ENCODE measurements at regions of chr12 and their contacts with region 1.

Region 1: GRCh38 chr12:101697197-101697929 is at the start of gene CHPT1:
- DNase-seq: peak; percentile 87
- ATAC-seq: peak; percentile 79
- H3K4me3 ChIP-seq: peak within 1 kb of the TSS; percentile 75 to 90 (median 83)
- H3K4me3 Mint-ChIP-seq: peak within 1 kb of the TSS; percentile 99
- H3K27ac ChIP-seq: peak within 1 kb of the TSS; percentile 83 to 88
- H3K27ac Mint-ChIP-seq: peak within 1 kb of the TSS; percentile 98
- H3K4me1 ChIP-seq: peaks cover 26 to 31% of the 10 kb centered on the region in 2 donors
- H3K4me1 Mint-ChIP-seq: peaks cover 61% of the 10 kb centered on the region
- H3K27me3 ChIP-seq: no peaks in the 10 kb centered on the region
- H3K27me3 Mint-ChIP-seq: no peaks in the 10 kb centered on the region
- CTCF ChIP-seq: no peak
- total RNA-seq, gene CHPT1: 215 and 224 TPM in 2 replicates

Region 2: DNA sequence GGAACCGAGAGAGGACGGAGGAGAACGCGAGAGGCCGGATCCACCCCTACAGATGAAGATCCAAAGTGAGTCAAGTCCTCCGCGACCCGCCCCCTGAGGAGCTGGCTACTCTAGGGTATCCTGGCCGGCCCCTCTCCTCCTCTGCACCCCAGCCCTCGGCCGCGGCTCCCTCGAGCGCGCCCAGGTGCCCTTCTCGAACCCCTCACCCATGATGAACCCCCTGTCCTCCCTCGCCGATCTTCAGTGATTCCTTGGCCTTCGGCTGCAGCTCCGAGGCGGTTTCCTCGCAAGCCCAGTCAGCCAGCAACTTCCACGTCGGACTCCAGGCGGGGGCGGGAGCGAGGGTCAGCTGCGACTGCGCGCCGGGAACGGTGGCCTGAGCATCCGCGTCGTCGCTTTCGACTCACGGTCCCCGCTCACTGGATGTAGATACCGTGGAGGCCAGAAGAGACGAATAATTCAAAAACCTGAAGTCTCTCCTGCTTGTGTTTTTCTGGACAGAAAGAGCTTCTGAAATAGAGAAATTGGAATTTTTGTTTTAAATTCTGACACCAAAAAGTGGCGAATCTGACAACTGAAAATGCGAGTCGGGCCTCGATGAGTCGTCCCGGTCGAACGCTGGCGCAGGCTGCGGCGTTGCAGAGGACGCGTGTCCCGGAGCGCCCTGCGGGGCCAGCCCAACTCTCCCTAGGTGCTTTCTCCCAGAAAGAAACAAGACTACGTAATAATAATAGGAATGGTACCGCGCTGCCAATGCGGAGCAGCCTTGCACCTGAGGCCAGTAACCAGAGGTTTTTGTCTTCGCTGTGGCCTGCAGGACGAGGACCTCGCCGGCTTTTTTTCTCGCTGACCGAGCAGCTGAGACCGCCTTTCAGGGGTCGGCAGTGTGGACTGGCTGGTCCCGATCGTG is 289.7 kb before region 1 on chr12 and contains the start of gene ARL1:
- CTCF ChIA-PET with region 1: no interaction called
- POLR2A ChIA-PET with region 1: no interaction called
- intact Hi-C with region 1: loop called (anchors 5 kb)
- DNase-seq: peak; percentile 92
- ATAC-seq: peak; percentile 86
- H3K4me3 ChIP-seq: peak within 1 kb of the TSS; percentile 80 to 95 (median 93)
- H3K4me3 Mint-ChIP-seq: peak within 1 kb of the TSS; percentile 99
- H3K27ac ChIP-seq: peak within 1 kb of the TSS; percentile 91 to 96
- H3K27ac Mint-ChIP-seq: peak within 1 kb of the TSS; percentile 97
- H3K4me1 ChIP-seq: peaks cover 9 to 12% of the 10 kb centered on the region in 2 donors
- H3K4me1 Mint-ChIP-seq: peaks cover 28% of the 10 kb centered on the region
- H3K27me3 ChIP-seq: no peaks in the 10 kb centered on the region
- H3K27me3 Mint-ChIP-seq: peaks cover 5% of the 10 kb centered on the region
- CTCF ChIP-seq: no peak
- total RNA-seq, gene ARL1: 40.7 and 51.2 TPM in 2 replicates

Region 3: DNA sequence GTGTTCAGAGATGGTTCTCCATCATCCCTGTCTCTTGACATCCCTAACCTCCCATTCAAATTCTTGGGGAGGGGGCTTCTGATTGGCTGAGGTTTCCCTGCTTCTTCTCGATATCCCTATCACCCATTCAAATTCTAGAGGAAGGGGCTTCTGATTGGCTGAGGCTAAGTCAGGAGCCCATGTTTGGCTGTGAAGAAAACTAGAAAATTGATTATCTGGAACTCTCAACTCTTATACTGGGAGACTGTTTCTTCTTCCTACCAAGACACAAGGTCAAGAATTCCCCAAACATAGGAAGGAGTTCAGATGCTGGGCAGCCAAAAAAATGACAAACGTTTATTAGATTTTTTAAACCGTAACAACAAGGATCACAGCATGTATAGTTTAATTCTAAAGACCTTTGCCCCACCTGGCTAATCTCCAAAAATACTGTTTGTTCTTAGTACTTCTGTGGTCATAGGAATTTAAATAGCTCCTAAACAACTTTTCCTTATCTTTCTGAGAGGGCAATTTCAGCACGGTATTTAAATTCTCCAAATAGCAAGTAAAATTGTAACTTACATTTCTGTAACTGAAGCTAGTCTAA is 195.9 kb before region 1 on chr12:
- CTCF ChIA-PET with region 1: no interaction called
- POLR2A ChIA-PET with region 1: no interaction called
- intact Hi-C with region 1: no loop called
- DNase-seq: no peak
- ATAC-seq: no peak
- H3K4me3 ChIP-seq: no peak overlapping the region
- H3K4me3 Mint-ChIP-seq: no peak overlapping the region
- H3K27ac ChIP-seq: no peak overlapping the region
- H3K27ac Mint-ChIP-seq: no peak overlapping the region
- H3K4me1 ChIP-seq: no peaks in the 10 kb centered on the region
- H3K4me1 Mint-ChIP-seq: peaks cover 6% of the 10 kb centered on the region
- H3K27me3 ChIP-seq: peaks cover 0 to 5% (median 0%) of the 10 kb centered on the region in 4 experiments
- H3K27me3 Mint-ChIP-seq: peaks cover 17% of the 10 kb centered on the region
- CTCF ChIP-seq: no peak

Region 4: GRCh38 chr12:101634724-101635123 is 62.6 kb before region 1 on chr12:
- CTCF ChIA-PET with region 1: interaction called, 10 read pairs
- POLR2A ChIA-PET with region 1: no interaction called
- intact Hi-C with region 1: loop called (anchors 1 kb)
- DNase-seq: peak; percentile 81
- ATAC-seq: peak; percentile 94
- H3K4me3 ChIP-seq: peak overlapping the region; percentile 1 to 45 (median 29)
- H3K4me3 Mint-ChIP-seq: peak overlapping the region; percentile 78
- H3K27ac ChIP-seq: peak overlapping the region; percentile 77 to 86
- H3K27ac Mint-ChIP-seq: peak overlapping the region; percentile 92
- H3K4me1 ChIP-seq: peaks cover 33 to 34% of the 10 kb centered on the region in 2 donors
- H3K4me1 Mint-ChIP-seq: peaks cover 32% of the 10 kb centered on the region
- H3K27me3 ChIP-seq: no peaks in the 10 kb centered on the region
- H3K27me3 Mint-ChIP-seq: no peaks in the 10 kb centered on the region
- CTCF ChIP-seq: no peak

Region 5: GRCh38 chr12:101670007-101670687 is 27.2 kb before region 1 on chr12:
- CTCF ChIA-PET with region 1: no interaction called
- POLR2A ChIA-PET with region 1: no interaction called
- intact Hi-C with region 1: loop called (anchors 1 kb)
- DNase-seq: peak; percentile 73
- ATAC-seq: peak; percentile 60
- H3K4me3 ChIP-seq: no peak overlapping the region
- H3K4me3 Mint-ChIP-seq: peak overlapping the region; percentile 14
- H3K27ac ChIP-seq: no peak overlapping the region
- H3K27ac Mint-ChIP-seq: peak overlapping the region; percentile 50
- H3K4me1 ChIP-seq: peaks cover 22 to 25% of the 10 kb centered on the region in 2 donors
- H3K4me1 Mint-ChIP-seq: peaks cover 22% of the 10 kb centered on the region
- H3K27me3 ChIP-seq: no peaks in the 10 kb centered on the region
- H3K27me3 Mint-ChIP-seq: peaks cover 7% of the 10 kb centered on the region
- CTCF ChIP-seq: peak; percentile 75

Region 6: DNA sequence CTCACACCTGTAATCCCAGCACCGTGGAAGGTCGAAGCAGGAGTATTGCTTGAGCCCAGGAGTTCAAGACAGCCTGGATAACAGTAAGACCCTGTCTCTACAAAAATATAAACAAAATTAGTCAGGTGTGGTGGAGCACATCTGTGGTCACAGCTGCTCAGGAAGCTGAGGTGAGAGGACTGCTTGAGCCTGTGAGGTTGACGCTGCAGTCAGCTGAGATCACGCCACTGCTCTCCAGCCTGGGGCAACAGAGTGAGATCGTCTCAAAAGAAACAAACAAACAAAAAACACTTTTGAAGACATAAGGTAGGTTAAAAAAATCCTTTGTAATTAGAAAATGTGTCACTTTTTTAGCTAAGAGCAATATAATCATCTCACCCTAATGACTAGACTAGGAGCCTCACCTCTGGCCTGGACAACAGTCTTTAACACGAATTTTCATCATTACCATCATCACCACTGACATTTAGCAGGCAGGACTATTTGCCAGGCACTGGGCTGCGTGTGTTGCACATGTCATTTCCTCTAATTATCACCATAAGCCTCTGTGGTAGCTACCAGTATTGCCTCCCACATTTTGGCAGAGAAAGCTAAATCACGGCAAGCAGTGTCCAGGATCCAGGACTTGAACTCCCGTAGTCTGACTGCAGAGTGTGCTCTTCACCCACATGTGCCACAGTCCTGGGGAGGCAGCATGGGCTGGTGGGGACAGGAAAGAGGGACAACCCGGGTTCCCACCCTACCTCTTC is 46.5 kb after region 1 on chr12:
- CTCF ChIA-PET with region 1: interaction called, 5 read pairs
- POLR2A ChIA-PET with region 1: interaction called, 34 read pairs
- intact Hi-C with region 1: loop called (anchors 1 kb)
- DNase-seq: peak; percentile 95
- ATAC-seq: peak; percentile 86
- H3K4me3 ChIP-seq: peak overlapping the region in 1 of 5 experiments; percentile 42
- H3K4me3 Mint-ChIP-seq: peak overlapping the region; percentile 48
- H3K27ac ChIP-seq: peak overlapping the region; percentile 94 to 97
- H3K27ac Mint-ChIP-seq: peak overlapping the region; percentile 99
- H3K4me1 ChIP-seq: peaks cover 45 to 50% of the 10 kb centered on the region in 2 donors
- H3K4me1 Mint-ChIP-seq: peaks cover 70% of the 10 kb centered on the region
- H3K27me3 ChIP-seq: no peaks in the 10 kb centered on the region
- H3K27me3 Mint-ChIP-seq: no peaks in the 10 kb centered on the region
- CTCF ChIP-seq: peak; percentile 59

Measured in B cell (primary cell).